Sciatic nerve (tissue), 2 donors: ENCODE measurements at regions of chr17 and their contacts with region 1.

Region 1: GRCh38 chr17:1055751-1056645 is 59.1 kb downstream of the TIMM22 start:
- DNase-seq: peak; percentile 85
- ATAC-seq: peak; percentile 86

Region 2: GRCh38 chr17:1005361-1005946 is 50.5 kb before region 1 on chr17:
- intact Hi-C with region 1: loop called (anchors 10 kb)
- DNase-seq: peak; percentile 79
- ATAC-seq: peak; percentile 12

Region 3: GRCh38 chr17:1039511-1040215 is 16.3 kb before region 1 on chr17:
- intact Hi-C with region 1: no loop called
- DNase-seq: peak; percentile 88
- ATAC-seq: peak; percentile 90

Region 4: DNA sequence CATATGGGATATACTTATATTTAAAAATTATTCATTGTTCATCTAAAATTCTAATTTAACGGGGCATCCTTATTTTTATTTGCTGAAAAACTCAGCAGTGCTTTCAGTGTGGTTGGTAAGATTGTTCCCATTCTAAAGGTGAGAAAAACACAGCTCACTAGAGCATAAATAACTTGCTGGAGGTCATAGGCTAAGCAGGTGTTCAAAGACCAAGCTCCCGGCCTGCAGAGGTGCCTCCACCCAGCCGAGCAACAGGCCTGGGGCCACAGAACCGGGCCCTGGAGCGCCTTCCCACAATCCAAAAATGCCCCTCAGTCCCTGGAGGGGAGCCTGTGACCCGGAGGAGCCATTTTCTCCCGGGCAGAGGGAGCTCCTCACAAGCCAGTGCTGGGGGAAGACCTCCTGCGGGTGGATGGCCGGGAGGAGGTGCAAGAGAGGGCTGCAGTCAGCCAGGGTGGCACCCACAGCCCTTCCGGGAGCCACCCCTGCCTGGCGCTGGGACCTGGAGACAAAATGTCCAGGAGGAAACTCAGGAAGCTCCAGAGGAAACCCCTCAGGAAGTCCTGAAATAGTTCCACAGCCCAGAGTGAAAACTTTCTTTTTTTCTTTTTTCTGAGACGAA is 109.0 kb after region 1 on chr17:
- intact Hi-C with region 1: no loop called
- DNase-seq: no peak
- ATAC-seq: no peak

Region 5: DNA sequence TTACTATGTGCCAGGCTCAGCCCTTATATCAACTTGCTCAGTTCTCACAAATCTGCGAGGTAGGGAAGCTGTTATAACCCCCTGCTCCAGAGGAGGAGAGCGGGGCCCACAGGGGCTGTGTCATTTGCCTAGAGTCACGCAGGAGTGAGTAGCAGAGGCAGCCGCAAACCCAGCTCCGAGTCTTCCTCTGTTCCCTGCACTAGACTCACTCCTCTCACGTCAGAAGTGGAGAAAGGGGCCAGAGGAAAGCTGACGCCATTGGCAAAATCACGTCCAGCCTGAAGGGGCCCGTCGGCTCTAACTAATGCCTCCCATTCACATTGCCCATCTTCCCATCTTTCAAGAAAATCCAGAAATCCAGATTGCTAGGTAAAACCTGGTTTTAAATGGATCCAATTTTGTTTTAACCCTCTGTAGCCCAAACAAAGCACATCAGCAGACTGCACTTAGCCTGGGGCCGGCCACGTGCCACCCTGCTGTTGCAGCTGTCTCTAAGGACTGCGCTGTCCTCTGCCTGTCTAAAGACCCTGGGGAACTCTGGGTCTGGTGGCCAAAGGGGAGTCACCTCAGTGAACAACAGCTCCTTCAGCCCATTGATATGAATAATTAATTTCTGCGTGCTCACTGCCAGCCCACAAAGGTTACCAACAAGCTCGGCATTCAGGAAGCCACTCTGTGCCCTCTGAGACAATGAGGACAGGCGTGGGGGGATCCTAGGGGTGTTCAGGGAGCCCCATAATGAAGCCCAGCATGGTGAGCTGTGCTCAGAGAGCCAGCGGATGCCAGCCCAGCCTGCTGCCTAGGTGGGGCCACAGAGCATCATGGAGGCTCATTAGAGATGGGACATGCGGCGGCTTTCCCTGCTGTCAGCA is 160.5 kb after region 1 on chr17:
- intact Hi-C with region 1: no loop called
- DNase-seq: no peak
- ATAC-seq: no peak

Region 6: GRCh38 chr17:1267471-1267947 is 211.5 kb after region 1 on chr17:
- intact Hi-C with region 1: no loop called
- DNase-seq: no peak
- ATAC-seq: peak; percentile 33